ENCODE measurements at regions of chr19 and their contacts with region 1.

Region 1: GRCh38 chr19:51473009-51473707 is 5.2 kb upstream of the CEACAM18 start:
- DNase-seq: peak; percentile 95
- H3K4me3 ChIP-seq: no peak overlapping the region
- H3K27ac ChIP-seq: no peak overlapping the region
- H3K4me1 ChIP-seq: no peaks in the 10 kb centered on the region
- H3K27me3 ChIP-seq: peaks cover 0 to 52% (median 0%) of the 10 kb centered on the region in 4 donors
- CTCF ChIP-seq: peak; percentile 73 to 84 (median 82)
- EP300 ChIP-seq: no peak
- POLR2A ChIP-seq: no peak

Region 2: DNA sequence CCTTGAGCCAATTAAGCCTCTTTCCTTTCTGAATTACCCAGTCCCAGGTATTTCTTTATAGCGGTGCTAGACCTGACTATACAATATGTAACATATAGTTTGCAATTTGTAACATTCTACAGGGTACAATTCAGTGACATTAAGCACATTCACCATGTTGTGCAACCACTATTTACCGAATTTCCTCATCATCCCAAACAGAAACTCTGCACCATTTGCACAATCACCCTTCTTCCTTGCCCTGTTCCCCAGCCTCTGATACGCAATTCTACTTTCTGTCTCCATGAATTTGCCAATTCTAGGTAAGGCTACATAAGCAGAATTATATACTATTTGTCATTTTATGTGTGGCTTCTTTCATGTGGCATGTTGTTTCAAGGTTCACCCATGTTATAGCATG is 42.0 kb before region 1 on chr19:
- intact Hi-C with region 1: no loop called
- DNase-seq: no peak
- H3K4me3 ChIP-seq: no peak overlapping the region
- H3K27ac ChIP-seq: no peak overlapping the region
- H3K4me1 ChIP-seq: no peaks in the 10 kb centered on the region
- H3K27me3 ChIP-seq: peaks cover 0 to 36% (median 0%) of the 10 kb centered on the region in 4 donors
- CTCF ChIP-seq: no peak
- EP300 ChIP-seq: no peak
- POLR2A ChIP-seq: no peak

Region 3: DNA sequence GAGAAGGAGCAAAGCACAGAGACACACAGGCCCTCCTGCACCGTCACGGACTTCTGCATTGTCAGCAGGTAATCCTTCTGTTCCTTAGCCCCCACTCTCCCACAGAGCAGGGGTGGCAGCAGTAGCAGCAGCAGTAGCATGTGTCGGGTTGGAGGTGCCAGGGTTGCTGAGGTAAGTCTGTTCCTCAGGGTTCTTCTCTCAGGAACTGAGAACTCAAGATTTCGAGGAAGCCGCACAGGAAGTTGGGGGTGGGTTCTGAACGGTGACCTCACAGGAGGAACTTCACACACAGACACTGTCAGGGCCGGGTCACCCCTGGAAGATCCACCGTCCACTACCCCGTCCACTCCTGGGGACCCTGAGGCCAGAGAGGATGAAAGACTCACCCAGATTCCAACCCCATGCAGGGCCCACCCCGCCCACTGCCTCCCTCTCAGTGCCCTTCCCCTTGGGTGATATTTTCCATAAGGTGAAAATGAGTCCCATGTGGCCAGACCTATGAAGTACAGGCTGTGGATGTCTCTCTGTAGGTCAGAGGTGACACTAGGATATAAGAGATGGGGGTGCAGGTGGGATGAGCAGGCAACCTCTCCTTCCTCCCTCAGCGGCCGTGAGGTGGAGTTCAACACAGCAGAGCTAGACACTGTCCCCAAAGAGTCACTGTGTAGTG is 28.6 kb after region 1 on chr19 and contains the start of gene SIGLEC12:
- intact Hi-C with region 1: no loop called
- DNase-seq: no peak
- H3K4me3 ChIP-seq: no peak within 1 kb of the TSS
- H3K27ac ChIP-seq: no peak within 1 kb of the TSS
- H3K4me1 ChIP-seq: no peaks in the 10 kb centered on the region
- H3K27me3 ChIP-seq: peaks cover 0 to 12% (median 0%) of the 10 kb centered on the region in 4 donors
- CTCF ChIP-seq: no peak
- EP300 ChIP-seq: no peak
- POLR2A ChIP-seq: no peak
- total RNA-seq, gene SIGLEC12: 0.29 TPM in 1 of 4 donors, not detected in the others

Region 4: DNA sequence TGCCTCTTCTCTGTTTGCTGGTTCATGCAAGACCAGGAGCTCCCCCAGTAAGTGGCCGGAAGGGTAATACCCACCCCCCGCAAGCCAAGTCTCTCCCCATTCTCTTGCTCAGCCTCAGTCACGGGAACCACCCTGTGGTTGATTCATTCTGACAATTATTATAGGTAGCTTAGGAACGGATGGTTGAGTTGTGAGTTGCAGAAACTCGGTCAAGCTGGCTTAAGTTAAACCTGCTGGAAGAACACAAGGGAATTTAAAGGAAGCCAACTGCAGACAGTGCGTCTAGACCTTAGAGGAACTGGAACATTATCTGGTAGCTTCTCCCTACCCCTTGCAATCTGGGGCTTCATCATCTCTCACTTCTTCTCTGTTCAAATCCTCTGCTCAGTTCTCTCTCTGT is 269.6 kb after region 1 on chr19:
- intact Hi-C with region 1: no loop called
- DNase-seq: no peak
- H3K4me3 ChIP-seq: no peak overlapping the region
- H3K27ac ChIP-seq: no peak overlapping the region
- H3K4me1 ChIP-seq: no peaks in the 10 kb centered on the region
- H3K27me3 ChIP-seq: peaks cover 0 to 25% (median 0%) of the 10 kb centered on the region in 4 donors
- CTCF ChIP-seq: no peak
- EP300 ChIP-seq: no peak
- POLR2A ChIP-seq: no peak

Region 5: DNA sequence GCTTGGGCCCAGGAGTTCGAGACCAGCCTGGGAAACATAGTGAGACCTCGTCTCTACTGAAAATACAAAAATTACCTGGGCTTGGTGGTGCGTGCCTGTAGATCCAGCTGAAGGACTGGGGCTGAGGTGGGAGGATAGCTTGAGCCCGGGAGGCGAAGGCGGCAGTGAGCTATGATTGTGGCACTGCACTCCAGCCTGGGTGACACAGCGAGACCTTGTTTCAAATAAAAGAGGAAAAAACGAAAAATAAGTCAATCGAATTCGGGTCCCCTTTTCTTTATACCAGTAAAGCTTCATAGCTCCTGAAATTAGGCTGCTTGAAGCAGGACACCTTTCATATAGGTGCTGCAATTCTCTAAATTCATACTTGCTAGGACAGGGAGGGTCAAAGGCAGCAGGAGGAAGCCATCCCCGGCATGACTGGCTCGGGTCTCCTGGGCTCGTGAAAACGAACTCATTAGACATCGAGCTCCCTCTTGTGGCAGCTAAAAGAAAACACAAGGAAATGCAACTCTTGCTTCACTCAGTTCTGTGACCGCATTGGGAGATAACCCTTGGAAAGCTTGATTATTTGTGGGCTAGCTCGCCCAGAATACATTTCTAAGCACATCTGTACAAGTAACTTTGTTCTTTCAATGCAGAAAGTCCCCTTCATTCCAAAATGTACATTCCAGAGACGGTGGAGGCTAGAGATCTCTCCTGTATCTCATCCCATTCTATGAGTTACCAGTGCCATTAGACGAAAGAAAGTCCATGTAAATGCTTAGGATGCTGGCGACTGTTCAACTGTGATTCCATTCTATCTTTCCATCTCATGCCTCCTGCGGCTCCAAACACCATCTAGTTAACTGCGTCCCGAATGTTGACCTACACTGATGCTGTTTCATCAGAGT is 304.7 kb after region 1 on chr19:
- intact Hi-C with region 1: loop called (anchors 2 kb)
- DNase-seq: peak; percentile 62
- H3K4me3 ChIP-seq: no peak overlapping the region
- H3K27ac ChIP-seq: no peak overlapping the region
- H3K4me1 ChIP-seq: peaks cover 3 to 7% (median 7%) of the 10 kb centered on the region in 4 donors
- H3K27me3 ChIP-seq: peaks cover 0 to 50% (median 7%) of the 10 kb centered on the region in 4 donors
- CTCF ChIP-seq: peak; percentile 59 to 80 (median 61)
- EP300 ChIP-seq: no peak
- POLR2A ChIP-seq: no peak